Posterior vena cava (tissue), 2 donors: ENCODE measurements at regions of chr10 and their contacts with region 1.

Region 1: GRCh38 chr10:33041779-33042437 is 83.9 kb upstream of the ITGB1 start:
- DNase-seq: no peak

Region 2: DNA sequence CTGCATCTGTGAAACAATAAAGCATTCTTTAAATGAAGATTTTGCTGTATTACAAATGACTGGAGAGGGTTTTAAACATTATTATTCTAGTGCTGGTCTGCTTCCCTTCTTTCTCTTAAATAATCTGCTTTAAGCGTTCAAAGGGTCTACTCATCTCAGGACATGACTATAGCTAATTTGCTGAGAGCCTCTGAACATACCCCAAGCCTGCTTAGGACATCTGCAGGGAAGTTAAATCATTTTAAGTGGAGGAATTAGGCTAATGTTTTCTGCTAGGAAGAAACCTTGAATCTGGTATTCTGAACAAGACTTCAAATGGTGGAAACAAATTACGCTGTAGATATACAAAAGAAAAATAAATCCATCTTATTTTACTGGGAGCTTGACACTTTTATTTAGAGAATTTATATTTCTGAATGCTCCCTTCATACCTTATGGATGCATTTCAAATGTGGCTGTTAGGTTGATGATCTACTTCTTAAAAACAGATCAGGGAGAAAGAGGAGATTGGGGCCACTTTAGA is 40.5 kb after region 1 on chr10:
- intact Hi-C with region 1: loop called in 1 of 2 experiments (anchors 1 kb)
- DNase-seq: no peak

Region 3: GRCh38 chr10:33092596-33092995 is 50.7 kb after region 1 on chr10:
- intact Hi-C with region 1: no loop called
- DNase-seq: no peak

Region 4: GRCh38 chr10:33204049-33204448 is 162.1 kb after region 1 on chr10:
- intact Hi-C with region 1: no loop called
- DNase-seq: no peak